Activated B cell treated with CpG ODN at 0.5 μM for 24 hours (primary cell): ENCODE measurements at regions of chr1 and their contacts with region 1.

Region 1: GRCh38 chr1:155135415-155136028 is at the start of gene SLC50A1:
- DNase-seq: peak; percentile 94
- ATAC-seq: peak; percentile 86
- H3K4me3 Mint-ChIP-seq: peak within 1 kb of the TSS; percentile 96
- H3K27ac Mint-ChIP-seq: peak within 1 kb of the TSS; percentile 99
- H3K4me1 Mint-ChIP-seq: peaks cover 46% of the 10 kb centered on the region
- H3K27me3 Mint-ChIP-seq: peaks cover 3% of the 10 kb centered on the region
- CTCF ChIP-seq: no peak
- total RNA-seq, gene SLC50A1: 77.3 and 85.2 TPM in 2 replicates

Region 2: DNA sequence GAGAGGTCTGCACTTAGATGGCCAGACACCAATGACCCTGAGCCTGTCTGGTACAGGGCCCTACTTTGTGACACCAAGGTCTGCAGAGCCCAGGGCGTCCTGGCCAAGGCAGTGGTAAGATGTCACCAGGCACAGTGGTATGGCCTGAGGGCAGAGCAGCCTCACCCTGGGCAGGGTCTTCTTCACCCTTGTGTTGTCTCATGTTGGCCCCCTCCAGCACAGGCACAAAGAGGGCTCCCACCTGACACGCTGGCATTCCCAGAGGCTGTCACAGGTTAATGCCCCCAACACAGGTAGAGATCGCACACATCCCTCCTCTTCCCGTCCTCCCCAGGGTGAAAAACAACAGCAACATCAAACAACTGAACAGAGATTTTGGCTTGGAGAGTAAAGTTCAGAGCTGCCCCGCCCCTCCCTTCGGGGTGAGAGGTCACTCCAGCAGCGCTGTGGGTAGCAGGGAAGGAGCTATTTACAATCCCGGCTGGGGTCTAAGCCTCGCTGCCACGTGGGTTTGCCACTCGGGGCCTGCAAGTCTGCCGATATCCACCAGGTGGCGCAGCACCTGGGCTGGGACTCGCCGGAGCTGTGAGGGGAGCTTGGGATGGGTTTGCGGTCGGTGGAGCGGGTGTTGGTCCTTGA is 44.3 kb before region 1 on chr1:
- CTCF ChIA-PET with region 1: interaction called, 12 read pairs
- POLR2A ChIA-PET with region 1: interaction called, 9 read pairs
- intact Hi-C with region 1: no loop called
- DNase-seq: peak; percentile 76
- ATAC-seq: peak; percentile 89
- H3K4me3 Mint-ChIP-seq: no peak overlapping the region
- H3K27ac Mint-ChIP-seq: no peak overlapping the region
- H3K4me1 Mint-ChIP-seq: peaks cover 12% of the 10 kb centered on the region
- H3K27me3 Mint-ChIP-seq: peaks cover 6% of the 10 kb centered on the region
- CTCF ChIP-seq: peak; percentile 48

Region 3: GRCh38 chr1:155193275-155193990 is 57.9 kb after region 1 on chr1:
- CTCF ChIA-PET with region 1: no interaction called
- POLR2A ChIA-PET with region 1: interaction called, 11 read pairs
- intact Hi-C with region 1: no loop called
- DNase-seq: peak; percentile 81
- ATAC-seq: peak; percentile 73
- H3K4me3 Mint-ChIP-seq: peak overlapping the region; percentile 88
- H3K27ac Mint-ChIP-seq: peak overlapping the region; percentile 84
- H3K4me1 Mint-ChIP-seq: peaks cover 28% of the 10 kb centered on the region
- H3K27me3 Mint-ChIP-seq: no peaks in the 10 kb centered on the region
- CTCF ChIP-seq: peak; percentile 63

Region 4: DNA sequence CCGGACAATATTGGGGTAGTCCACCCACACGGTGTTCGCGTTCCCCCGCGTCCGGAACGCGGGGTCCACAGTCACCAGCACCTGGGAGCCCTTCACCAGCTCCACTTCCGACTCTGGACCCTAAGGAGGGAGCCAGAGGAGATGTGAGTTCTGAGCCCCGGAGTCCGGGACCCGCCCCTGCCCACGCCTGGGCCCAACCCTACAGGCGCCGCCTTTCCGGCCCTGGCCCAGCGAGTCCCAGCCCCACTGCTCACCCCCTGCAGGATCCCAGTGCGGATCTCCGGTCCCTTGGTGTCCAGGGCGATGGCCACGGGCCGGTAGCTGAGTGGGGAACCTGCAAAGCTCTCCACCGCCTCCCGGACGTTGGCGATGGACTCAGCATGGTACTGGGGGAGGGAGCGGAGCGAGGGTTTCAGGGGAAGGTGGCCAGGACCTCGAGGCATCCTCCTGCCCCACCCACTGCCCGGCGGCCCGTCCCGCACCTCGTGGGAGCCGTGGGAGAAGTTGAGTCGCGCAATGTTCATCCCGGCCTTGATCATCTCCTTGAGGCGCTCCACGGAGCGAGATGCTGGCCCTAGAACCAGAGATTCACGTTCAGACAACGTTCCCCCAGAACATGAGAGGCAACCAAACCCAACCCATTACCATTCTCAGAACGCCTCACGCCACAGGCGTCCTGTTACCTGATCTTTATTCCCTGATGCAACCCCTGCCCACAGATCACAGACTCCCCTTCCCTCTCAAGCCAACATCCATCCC is 159.8 kb after region 1 on chr1:
- CTCF ChIA-PET with region 1: no interaction called
- POLR2A ChIA-PET with region 1: no interaction called
- intact Hi-C with region 1: no loop called
- DNase-seq: no peak
- ATAC-seq: no peak
- H3K4me3 Mint-ChIP-seq: no peak overlapping the region
- H3K27ac Mint-ChIP-seq: no peak overlapping the region
- H3K4me1 Mint-ChIP-seq: peaks cover 6% of the 10 kb centered on the region
- H3K27me3 Mint-ChIP-seq: peaks cover 36% of the 10 kb centered on the region
- CTCF ChIP-seq: no peak